ENCODE measurements at regions of chr1 and their contacts with region 1.

Region 1: DNA sequence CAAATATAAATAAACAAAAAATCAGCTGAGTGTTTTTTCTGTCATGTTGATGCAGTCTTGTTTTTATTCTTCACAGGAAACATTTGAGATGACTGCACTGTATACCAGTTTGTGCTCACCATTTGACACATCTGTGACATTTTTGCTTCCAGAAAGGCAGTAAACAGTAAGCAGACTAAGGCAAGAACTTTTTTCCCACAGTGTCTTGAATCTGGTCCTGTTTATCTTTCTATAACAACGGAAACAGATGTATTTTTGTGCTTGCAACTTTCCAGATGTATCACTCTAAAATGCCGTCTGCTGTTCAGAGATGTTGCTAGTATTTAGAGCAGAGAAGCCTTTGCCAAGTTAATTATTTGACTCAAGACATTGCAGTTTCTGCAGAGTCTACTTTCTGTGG is 105.5 kb downstream of the ZC3H11B start:
- DNase-seq: no peak
- ATAC-seq: no peak
- H3K4me3 ChIP-seq: no peak overlapping the region
- H3K27ac ChIP-seq: no peak overlapping the region
- H3K4me1 ChIP-seq: peaks cover 31% of the 10 kb centered on the region
- H3K27me3 ChIP-seq: no peaks in the 10 kb centered on the region
- CTCF ChIP-seq: no peak

Region 2: GRCh38 chr1:218804014-218804785 is 703.2 kb before region 1 on chr1:
- CTCF ChIA-PET with region 1: no interaction called
- POLR2A ChIA-PET with region 1: no interaction called
- intact Hi-C with region 1: loop called (anchors 5 kb)
- DNase-seq: peak; percentile 93
- ATAC-seq: peak; percentile 92
- H3K4me3 ChIP-seq: no peak overlapping the region
- H3K27ac ChIP-seq: peak overlapping the region; percentile 77
- H3K4me1 ChIP-seq: peaks cover 31% of the 10 kb centered on the region
- H3K27me3 ChIP-seq: no peaks in the 10 kb centered on the region
- CTCF ChIP-seq: no peak

Region 3: GRCh38 chr1:219373616-219373935 is 133.9 kb before region 1 on chr1:
- CTCF ChIA-PET with region 1: no interaction called
- POLR2A ChIA-PET with region 1: no interaction called
- intact Hi-C with region 1: no loop called
- DNase-seq: no peak
- ATAC-seq: no peak
- H3K4me3 ChIP-seq: no peak overlapping the region
- H3K27ac ChIP-seq: no peak overlapping the region
- H3K4me1 ChIP-seq: peaks cover 3% of the 10 kb centered on the region; the same call in 1 of the 2 replicates
- H3K27me3 ChIP-seq: no peaks in the 10 kb centered on the region
- CTCF ChIP-seq: no peak

Region 4: DNA sequence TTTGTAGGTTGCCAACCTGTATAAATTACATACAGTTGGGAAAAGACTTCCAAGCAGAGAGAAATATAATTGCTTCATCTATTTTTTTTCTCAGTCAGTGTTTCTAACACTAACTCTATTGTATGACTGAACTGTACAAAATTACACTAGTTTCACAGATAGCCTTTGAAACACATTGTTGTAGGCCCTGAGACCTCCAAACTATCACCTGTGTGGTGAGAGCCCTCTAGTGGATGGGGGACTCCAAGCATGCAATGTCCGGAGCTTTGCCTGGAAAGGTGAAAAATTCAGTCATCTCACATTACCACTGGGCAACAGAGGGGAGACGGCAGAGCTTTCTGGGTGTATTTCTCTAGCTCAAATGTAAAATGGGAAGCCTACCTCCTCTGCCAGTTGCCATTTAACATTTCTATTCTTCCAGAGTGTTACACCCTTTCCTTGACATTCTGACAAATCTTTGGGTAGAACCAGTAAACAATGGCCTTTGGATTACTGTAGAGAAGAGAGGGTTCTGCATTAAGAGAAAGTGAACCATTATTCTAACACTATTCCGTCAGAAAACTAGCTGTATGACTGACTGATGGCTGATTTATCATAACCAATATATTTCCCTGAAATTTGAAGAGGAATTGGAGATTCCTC is 121.5 kb before region 1 on chr1:
- CTCF ChIA-PET with region 1: no interaction called
- POLR2A ChIA-PET with region 1: interaction called, 11 read pairs
- intact Hi-C with region 1: no loop called
- DNase-seq: peak; percentile 96
- ATAC-seq: peak; percentile 98
- H3K4me3 ChIP-seq: no peak overlapping the region
- H3K27ac ChIP-seq: no peak overlapping the region
- H3K4me1 ChIP-seq: peaks cover 4% of the 10 kb centered on the region; the same call in 1 of the 2 replicates
- H3K27me3 ChIP-seq: no peaks in the 10 kb centered on the region
- CTCF ChIP-seq: peak; percentile 99

Region 5: DNA sequence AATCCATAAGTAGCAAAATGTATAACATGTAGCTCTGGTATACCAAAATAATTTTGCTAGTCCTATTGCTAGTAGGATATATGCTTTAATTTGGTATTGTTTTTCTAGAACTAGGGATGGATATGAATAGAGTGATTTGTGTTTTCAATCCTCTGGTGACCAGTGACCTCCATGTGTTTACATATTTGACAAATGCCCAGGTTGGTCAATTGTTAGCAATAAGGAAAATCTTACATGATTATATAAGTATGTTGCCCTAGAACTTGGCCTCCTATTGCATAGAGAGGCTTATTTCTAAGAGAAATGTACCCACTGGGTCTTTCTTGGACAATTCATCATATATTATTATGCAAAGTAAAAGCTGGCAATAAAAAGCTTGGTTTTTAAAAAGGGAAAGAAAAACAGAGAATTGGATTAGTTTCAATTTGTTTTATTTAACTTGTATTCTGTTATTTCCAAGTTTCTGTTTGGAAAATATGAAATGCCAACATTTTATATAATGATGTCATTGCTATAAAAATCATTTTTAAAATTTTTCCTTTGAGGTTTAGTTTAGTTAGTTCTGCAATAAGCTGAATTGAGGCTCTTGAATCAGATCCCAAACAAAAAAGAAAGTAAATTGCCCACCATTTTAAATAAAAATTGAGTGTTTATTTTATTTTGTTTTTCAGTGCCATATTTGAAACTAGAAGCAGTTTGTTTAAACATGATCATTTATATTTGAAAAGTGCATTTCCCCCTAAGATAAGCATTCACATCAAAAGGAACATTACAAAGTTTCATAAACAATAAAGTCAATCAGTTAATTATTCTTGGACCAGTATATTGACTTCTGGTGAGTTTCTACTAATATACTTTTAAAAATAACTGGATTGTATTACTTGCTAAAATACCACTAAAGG is 105.5 kb before region 1 on chr1:
- CTCF ChIA-PET with region 1: no interaction called
- POLR2A ChIA-PET with region 1: no interaction called
- intact Hi-C with region 1: loop called (anchors 5 kb)
- DNase-seq: peak; percentile 17
- ATAC-seq: peak; percentile 39
- H3K4me3 ChIP-seq: no peak overlapping the region
- H3K27ac ChIP-seq: no peak overlapping the region
- H3K4me1 ChIP-seq: peaks cover 5% of the 10 kb centered on the region; the same call in 1 of the 2 replicates
- H3K27me3 ChIP-seq: no peaks in the 10 kb centered on the region
- CTCF ChIP-seq: no peak

Region 6: GRCh38 chr1:219422811-219423598 is 84.4 kb before region 1 on chr1:
- CTCF ChIA-PET with region 1: no interaction called
- POLR2A ChIA-PET with region 1: no interaction called
- intact Hi-C with region 1: loop called (anchors 1 kb)
- DNase-seq: peak; percentile 97
- ATAC-seq: peak; percentile 97
- H3K4me3 ChIP-seq: peak overlapping the region; percentile 11; the same call in 1 of the 2 replicates
- H3K27ac ChIP-seq: peak overlapping the region; percentile 86
- H3K4me1 ChIP-seq: peaks cover 22% of the 10 kb centered on the region
- H3K27me3 ChIP-seq: no peaks in the 10 kb centered on the region
- CTCF ChIP-seq: no peak

Region 7: DNA sequence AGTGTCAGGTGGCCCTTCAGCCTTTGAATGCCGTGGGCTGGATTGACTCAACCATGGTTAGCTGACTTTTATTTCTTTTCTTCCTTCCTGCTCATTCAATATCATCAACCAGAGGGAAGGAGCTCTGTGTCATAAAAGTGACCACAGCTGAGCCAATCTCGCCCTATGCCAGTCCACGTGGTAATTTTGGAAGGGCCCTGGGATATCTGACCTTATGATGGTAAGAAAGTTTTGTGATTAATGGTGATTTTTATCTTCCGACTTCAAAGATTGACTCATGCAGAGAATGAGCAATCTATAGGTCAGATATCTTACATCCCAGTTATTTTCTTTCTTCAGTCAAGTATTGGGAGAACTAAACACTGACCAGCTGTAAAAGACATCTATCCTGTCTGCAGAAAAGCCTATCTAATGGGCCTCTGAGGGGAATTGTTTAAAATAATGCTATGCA is 64.8 kb before region 1 on chr1:
- CTCF ChIA-PET with region 1: no interaction called
- POLR2A ChIA-PET with region 1: interaction called, 3 read pairs
- intact Hi-C with region 1: loop called (anchors 1 kb)
- DNase-seq: peak; percentile 99
- ATAC-seq: peak; percentile 84
- H3K4me3 ChIP-seq: peak overlapping the region; percentile 23; the same call in 1 of the 2 replicates
- H3K27ac ChIP-seq: peak overlapping the region; percentile 81
- H3K4me1 ChIP-seq: peaks cover 48% of the 10 kb centered on the region
- H3K27me3 ChIP-seq: no peaks in the 10 kb centered on the region
- CTCF ChIP-seq: no peak

Region 8: DNA sequence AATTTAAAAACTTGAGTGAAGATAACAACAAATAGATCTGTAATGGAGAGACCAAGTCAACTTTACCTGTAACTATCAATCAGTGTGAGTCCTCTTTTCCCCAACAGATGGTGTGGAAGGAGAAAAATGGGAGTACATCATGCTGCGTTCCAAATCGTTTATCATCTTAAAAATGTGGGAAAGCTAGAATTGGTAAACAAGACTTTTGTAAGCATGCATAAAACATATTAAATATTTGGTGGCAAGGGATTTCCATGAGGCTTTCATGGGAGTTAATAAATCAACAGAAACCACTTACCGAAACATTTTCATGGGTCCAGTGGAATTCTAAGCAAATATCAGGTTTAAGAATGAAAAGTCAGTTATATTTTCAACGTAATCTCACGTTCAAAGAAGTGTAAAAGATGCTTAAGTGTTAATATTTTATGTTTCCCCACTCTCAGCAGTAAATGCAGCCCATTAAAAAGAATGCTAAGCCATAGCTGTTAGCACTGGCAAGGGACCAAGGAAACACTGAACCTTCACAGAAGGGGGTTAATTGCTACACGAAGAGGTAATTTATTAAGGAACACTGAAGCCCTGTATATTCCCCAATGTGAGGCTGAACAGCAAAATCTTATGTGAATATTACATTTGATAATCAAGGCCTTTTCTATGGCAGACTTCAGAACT is 11.6 kb before region 1 on chr1:
- CTCF ChIA-PET with region 1: no interaction called
- POLR2A ChIA-PET with region 1: no interaction called
- intact Hi-C with region 1: no loop called
- DNase-seq: no peak
- ATAC-seq: no peak
- H3K4me3 ChIP-seq: no peak overlapping the region
- H3K27ac ChIP-seq: no peak overlapping the region
- H3K4me1 ChIP-seq: no peaks in the 10 kb centered on the region
- H3K27me3 ChIP-seq: no peaks in the 10 kb centered on the region
- CTCF ChIP-seq: no peak

Region 9: DNA sequence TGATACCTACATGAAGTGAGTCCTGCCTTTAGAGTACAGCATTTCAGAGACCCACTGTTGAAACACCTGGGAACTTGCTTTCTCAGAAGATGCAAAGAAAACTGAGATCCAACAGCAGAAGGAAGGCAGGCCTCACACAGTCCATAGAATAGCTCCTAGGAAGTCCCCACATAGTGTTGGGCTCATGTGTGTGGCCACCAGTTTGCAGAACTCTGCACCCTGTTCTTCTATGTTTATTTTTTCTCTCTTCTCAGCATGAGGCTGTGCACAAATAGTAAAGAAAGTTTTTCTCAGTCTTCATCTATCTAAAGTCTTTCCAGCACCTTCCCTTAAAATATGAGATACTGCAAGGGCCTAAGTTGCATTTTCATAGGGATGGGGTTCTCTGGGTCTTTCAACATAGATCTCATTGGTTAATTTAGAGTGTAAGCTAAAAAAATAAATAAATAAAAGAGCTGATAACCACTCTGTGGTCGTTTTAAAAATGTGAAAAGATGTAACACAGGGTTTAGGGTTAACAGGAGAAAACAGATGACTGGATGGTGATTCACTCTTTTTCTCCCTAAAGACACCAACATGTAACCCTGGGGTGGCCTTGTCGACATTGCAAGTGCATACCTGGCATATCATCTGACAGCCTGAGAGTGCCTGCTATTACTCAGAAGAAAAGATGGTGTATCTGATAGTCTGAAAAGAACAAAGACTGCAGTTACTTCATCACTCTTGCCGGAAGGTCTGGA is 10.9 kb after region 1 on chr1:
- CTCF ChIA-PET with region 1: no interaction called
- POLR2A ChIA-PET with region 1: no interaction called
- intact Hi-C with region 1: loop called (anchors 1 kb)
- DNase-seq: peak; percentile 98
- ATAC-seq: peak; percentile 91
- H3K4me3 ChIP-seq: no peak overlapping the region
- H3K27ac ChIP-seq: peak overlapping the region; percentile 80
- H3K4me1 ChIP-seq: peaks cover 42% of the 10 kb centered on the region
- H3K27me3 ChIP-seq: no peaks in the 10 kb centered on the region
- CTCF ChIP-seq: no peak

Region 10: GRCh38 chr1:219533282-219533681 is 25.8 kb after region 1 on chr1:
- CTCF ChIA-PET with region 1: no interaction called
- POLR2A ChIA-PET with region 1: no interaction called
- intact Hi-C with region 1: no loop called
- DNase-seq: no peak
- ATAC-seq: no peak
- H3K4me3 ChIP-seq: no peak overlapping the region
- H3K27ac ChIP-seq: no peak overlapping the region
- H3K4me1 ChIP-seq: no peaks in the 10 kb centered on the region
- H3K27me3 ChIP-seq: no peaks in the 10 kb centered on the region
- CTCF ChIP-seq: no peak

Region 11: GRCh38 chr1:219938706-219939105 is 431.3 kb after region 1 on chr1:
- CTCF ChIA-PET with region 1: no interaction called
- POLR2A ChIA-PET with region 1: no interaction called
- intact Hi-C with region 1: no loop called
- DNase-seq: peak; percentile 83
- ATAC-seq: peak; percentile 90
- H3K4me3 ChIP-seq: no peak overlapping the region
- H3K27ac ChIP-seq: no peak overlapping the region
- H3K4me1 ChIP-seq: peaks cover 5% of the 10 kb centered on the region; the same call in 1 of the 2 replicates
- H3K27me3 ChIP-seq: peaks cover 38% of the 10 kb centered on the region
- CTCF ChIP-seq: no peak

Measured in PC-3 (cell line).